H1 (cell line): ENCODE measurements at regions of chr19 and their contacts with region 1.

Region 1: GRCh38 chr19:47157431-47158321 is 27.0 kb downstream of the SAE1 start:
- DNase-seq: peak; percentile 66 to 67
- H3K4me3 ChIP-seq: peak overlapping the region in 2 of 4 experiments; percentile 32 to 36; a peak in 4 of 8 replicates
- H3K27ac ChIP-seq: peak overlapping the region; percentile 82
- H3K4me1 ChIP-seq: peaks cover 13 to 21% (median 19%) of the 10 kb centered on the region in 4 experiments
- H3K27me3 ChIP-seq: no peaks in the 10 kb centered on the region
- CTCF ChIP-seq: peak in 1 of 3 experiments; percentile 26; a peak in 1 of 4 replicates
- EP300 ChIP-seq: no peak
- POLR2A ChIP-seq: peak in 1 of 2 experiments; percentile 18; a peak in 1 of 3 replicates
- RAD21 ChIP-seq: 0 out of 4 replicates have a peak, but pooled peaks of 1 of the 2 experiments have one; percentile 2

Region 2: DNA sequence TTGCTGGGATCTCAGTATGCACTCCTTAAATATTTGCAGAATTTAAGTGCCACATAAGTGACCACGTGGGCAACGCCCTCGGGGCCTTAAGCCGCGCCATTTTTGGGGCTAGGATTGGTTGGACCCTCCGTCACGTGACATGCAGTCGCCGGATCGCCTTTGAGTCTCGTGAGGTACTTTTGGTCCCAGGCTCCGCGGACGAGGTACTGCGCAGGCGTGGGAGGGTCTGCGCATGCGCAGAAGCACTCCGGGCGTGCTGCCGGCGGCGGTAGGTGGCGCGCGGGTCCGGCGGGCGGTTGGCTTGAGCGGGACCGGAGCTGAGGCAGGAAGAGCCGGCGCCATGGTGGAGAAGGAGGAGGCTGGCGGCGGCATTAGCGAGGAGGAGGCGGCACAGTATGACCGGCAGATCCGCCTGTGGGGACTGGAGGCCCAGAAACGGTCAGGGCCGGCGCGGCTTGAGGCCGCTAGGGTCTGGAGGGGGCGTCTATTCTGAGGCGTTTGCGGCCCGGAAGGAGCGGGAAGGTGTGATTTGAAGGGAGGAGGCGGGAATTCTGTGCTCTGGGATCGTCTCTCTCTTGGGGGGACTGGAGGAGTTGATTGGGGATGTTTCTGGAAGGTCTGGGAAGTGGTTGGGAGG is 27.0 kb before region 1 on chr19 and contains the start of gene SAE1:
- CTCF ChIA-PET with region 1: interaction called, 3 read pairs
- POLR2A ChIA-PET with region 1: interaction called, 98 read pairs
- DNase-seq: peak; percentile 98 to 99
- H3K4me3 ChIP-seq: peak within 1 kb of the TSS; percentile 90 to 99 (median 94)
- H3K27ac ChIP-seq: peak within 1 kb of the TSS; percentile 94
- H3K4me1 ChIP-seq: peaks cover 0 to 8% (median 7%) of the 10 kb centered on the region in 4 experiments; a peak in 5 of 7 replicates
- H3K27me3 ChIP-seq: no peaks in the 10 kb centered on the region
- CTCF ChIP-seq: peak; percentile 34 to 63 (median 52); a peak in 3 of 4 replicates
- EP300 ChIP-seq: no peak
- POLR2A ChIP-seq: peak; percentile 78 to 84
- RAD21 ChIP-seq: peak; percentile 38 to 41; a peak in 2 of 4 replicates
- total RNA-seq, gene SAE1: 268 and 273 TPM in 2 replicates

Region 3: GRCh38 chr19:47143322-47144073 is 14.2 kb before region 1 on chr19:
- CTCF ChIA-PET with region 1: interaction called, 10 read pairs
- POLR2A ChIA-PET with region 1: interaction called, 98 read pairs
- DNase-seq: no peak
- H3K4me3 ChIP-seq: no peak overlapping the region
- H3K27ac ChIP-seq: peak overlapping the region; percentile 42; the same call in 1 of the 2 replicates
- H3K4me1 ChIP-seq: no peaks in the 10 kb centered on the region
- H3K27me3 ChIP-seq: no peaks in the 10 kb centered on the region
- CTCF ChIP-seq: no peak
- EP300 ChIP-seq: no peak
- POLR2A ChIP-seq: no peak
- RAD21 ChIP-seq: no peak

Region 4: GRCh38 chr19:47168065-47168464 is 10.4 kb after region 1 on chr19:
- CTCF ChIA-PET with region 1: interaction called, 14 read pairs
- POLR2A ChIA-PET with region 1: interaction called, 38 read pairs
- DNase-seq: no peak
- H3K4me3 ChIP-seq: no peak overlapping the region
- H3K27ac ChIP-seq: no peak overlapping the region
- H3K4me1 ChIP-seq: no peaks in the 10 kb centered on the region
- H3K27me3 ChIP-seq: no peaks in the 10 kb centered on the region
- CTCF ChIP-seq: no peak
- EP300 ChIP-seq: no peak
- POLR2A ChIP-seq: no peak
- RAD21 ChIP-seq: no peak

Region 5: GRCh38 chr19:47190167-47190727 is 32.6 kb after region 1 on chr19:
- CTCF ChIA-PET with region 1: interaction called, 4 read pairs
- POLR2A ChIA-PET with region 1: interaction called, 15 read pairs
- DNase-seq: no peak
- H3K4me3 ChIP-seq: no peak overlapping the region
- H3K27ac ChIP-seq: no peak overlapping the region
- H3K4me1 ChIP-seq: no peaks in the 10 kb centered on the region
- H3K27me3 ChIP-seq: no peaks in the 10 kb centered on the region
- CTCF ChIP-seq: no peak
- EP300 ChIP-seq: no peak
- POLR2A ChIP-seq: no peak
- RAD21 ChIP-seq: no peak

Region 6: DNA sequence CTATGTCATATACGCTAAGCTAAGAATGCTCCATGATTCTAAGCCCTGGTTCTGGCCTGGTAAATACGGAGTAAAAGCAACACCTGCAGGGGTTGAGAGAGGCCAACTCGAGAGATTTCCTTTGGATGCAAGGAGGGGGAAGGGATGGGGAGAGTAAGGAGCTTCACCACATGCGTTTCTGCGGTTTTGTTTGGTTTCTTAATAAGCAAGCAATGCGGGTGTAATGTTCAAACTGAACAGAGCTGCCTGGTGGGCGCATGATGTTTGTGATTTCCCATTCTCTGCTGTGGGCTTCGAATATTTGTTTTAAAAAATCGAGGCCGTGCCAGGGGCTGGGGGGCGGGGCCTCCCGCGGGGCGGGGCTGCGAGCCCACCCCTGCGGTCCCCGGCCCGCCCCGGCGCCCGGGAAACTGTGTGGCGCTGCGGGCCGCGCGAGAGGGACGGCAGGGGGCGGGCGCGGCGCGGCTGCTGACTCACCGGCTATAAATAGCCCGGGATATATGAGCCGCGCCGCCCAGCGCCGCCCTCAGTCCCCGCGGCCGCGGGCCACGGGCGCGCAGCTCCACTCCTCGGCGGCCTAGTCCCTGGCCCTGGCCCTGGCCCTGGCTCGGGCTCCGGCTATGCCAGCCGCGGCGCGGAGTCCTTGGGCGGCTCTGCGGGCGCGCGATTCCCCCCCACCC is 68.2 kb after region 1 on chr19:
- CTCF ChIA-PET with region 1: interaction called, 3 read pairs
- POLR2A ChIA-PET with region 1: interaction called, 36 read pairs
- DNase-seq: peak in 1 of 2 experiments; percentile 91
- H3K4me3 ChIP-seq: peak overlapping the region; percentile 36 to 99 (median 72); a peak in 7 of 8 replicates
- H3K27ac ChIP-seq: peak overlapping the region; percentile 82; the same call in 1 of the 2 replicates
- H3K4me1 ChIP-seq: peaks cover 5 to 32% (median 17%) of the 10 kb centered on the region in 4 experiments
- H3K27me3 ChIP-seq: no peaks in the 10 kb centered on the region; a peak in 1 of 7 replicates
- CTCF ChIP-seq: peak in 1 of 3 experiments; percentile 39; a peak in 2 of 4 replicates
- EP300 ChIP-seq: peak in 1 of 2 experiments; percentile 71; a peak in 2 of 3 replicates
- POLR2A ChIP-seq: peak; percentile 98 to 100
- RAD21 ChIP-seq: no peak